ENCODE measurements at regions of chr21 and their contacts with region 1.

Region 1: DNA sequence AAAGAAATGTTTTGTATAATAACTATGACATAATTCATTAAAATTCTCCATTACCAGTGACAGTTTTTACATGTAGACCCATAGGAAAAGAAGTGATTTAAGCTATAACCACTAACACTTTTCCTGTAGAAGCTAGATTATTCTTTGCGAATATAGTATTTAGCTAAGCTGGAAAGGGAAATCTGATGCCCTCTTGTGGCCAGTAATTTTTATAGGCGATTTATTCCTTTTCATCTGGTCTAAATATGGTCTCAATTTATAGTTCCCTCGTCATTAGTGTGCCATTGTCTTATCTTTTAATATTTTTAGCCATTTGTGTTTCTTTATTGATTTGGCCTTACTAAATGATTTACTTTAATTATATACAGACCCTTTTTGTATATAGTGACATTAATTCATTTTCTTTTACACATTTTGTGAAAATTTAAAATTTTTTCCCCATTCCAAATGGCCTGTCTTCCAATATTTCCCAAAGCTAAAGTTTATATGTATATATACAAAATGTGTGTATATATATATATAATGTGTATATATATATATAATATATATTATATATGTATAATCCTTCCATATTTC is 26.7 kb downstream of the BTG3 start:
- DNase-seq: no peak
- H3K4me3 Mint-ChIP-seq: no peak overlapping the region
- H3K27ac Mint-ChIP-seq: no peak overlapping the region
- H3K4me1 Mint-ChIP-seq: no peaks in the 10 kb centered on the region
- H3K27me3 Mint-ChIP-seq: no peaks in the 10 kb centered on the region

Region 2: GRCh38 chr21:17387030-17387617 is 198.8 kb before region 1 on chr21:
- CTCF ChIA-PET with region 1: interaction called, 75 read pairs
- intact Hi-C with region 1: loop called (anchors 1 kb)
- DNase-seq: peak; percentile 61
- H3K4me3 Mint-ChIP-seq: no peak overlapping the region
- H3K27ac Mint-ChIP-seq: no peak overlapping the region
- H3K4me1 Mint-ChIP-seq: no peaks in the 10 kb centered on the region
- H3K27me3 Mint-ChIP-seq: peaks cover 10% of the 10 kb centered on the region

Region 3: GRCh38 chr21:17598437-17598836 is 12.5 kb after region 1 on chr21:
- CTCF ChIA-PET with region 1: interaction called, 12 read pairs
- intact Hi-C with region 1: no loop called
- DNase-seq: no peak
- H3K4me3 Mint-ChIP-seq: no peak overlapping the region
- H3K27ac Mint-ChIP-seq: no peak overlapping the region
- H3K4me1 Mint-ChIP-seq: peaks cover 11% of the 10 kb centered on the region
- H3K27me3 Mint-ChIP-seq: no peaks in the 10 kb centered on the region

Region 4: GRCh38 chr21:17611414-17612022 is 25.6 kb after region 1 on chr21:
- CTCF ChIA-PET with region 1: interaction called, 4 read pairs
- intact Hi-C with region 1: loop called (anchors 1 kb)
- DNase-seq: peak; percentile 88
- H3K4me3 Mint-ChIP-seq: peak overlapping the region; percentile 83
- H3K27ac Mint-ChIP-seq: peak overlapping the region; percentile 91
- H3K4me1 Mint-ChIP-seq: peaks cover 31% of the 10 kb centered on the region
- H3K27me3 Mint-ChIP-seq: no peaks in the 10 kb centered on the region

Measured in activated naive CD4-positive, alpha-beta T cell treated with anti-CD3 and anti-CD28 coated beads for 36 hours (primary cell).